ENCODE measurements at regions of chr11 and their contacts with region 1.

Region 1: DNA sequence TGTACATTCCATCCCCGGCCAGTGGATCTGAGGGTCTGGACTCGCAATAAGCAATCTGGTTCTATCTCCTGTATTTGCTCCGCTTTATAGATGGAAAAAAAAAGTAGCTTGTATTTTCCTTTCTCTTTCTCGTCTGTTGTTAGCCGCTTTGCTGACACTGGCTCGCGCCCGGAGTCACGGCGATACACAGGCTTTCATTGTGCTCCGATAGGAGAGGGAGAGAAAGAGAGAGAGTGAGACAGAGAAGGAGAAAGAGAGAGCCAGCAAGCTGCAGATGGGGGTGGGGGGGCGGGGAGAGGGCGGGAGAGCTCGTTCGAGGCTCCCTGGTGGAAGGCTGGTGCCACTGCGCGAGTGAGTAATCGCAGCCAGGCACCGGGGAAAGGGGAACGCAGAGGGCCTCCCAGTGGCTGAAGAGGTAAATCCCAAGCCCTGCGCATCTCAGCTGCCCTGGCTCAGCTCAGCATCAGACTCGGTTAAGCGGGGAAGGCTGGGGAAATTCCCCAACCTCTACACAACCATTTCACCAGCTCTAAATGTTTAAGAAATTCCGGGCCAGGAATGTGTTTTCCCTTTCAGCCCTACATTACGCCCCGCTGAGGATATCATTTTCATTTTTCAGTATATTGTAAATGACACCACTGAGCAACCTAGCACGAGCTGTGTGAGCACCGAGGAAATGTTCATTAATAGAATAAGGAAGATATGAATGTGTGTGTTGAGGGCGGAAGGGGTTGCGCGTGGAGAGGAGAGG is at the start of gene MAML2:
- DNase-seq: peak; percentile 83 to 97 (median 89)
- ATAC-seq: peak; percentile 88
- H3K4me3 ChIP-seq: peak within 1 kb of the TSS; percentile 92
- H3K4me3 Mint-ChIP-seq: peak within 1 kb of the TSS; percentile 97
- H3K27ac ChIP-seq: peak within 1 kb of the TSS; percentile 45 to 86
- H3K27ac Mint-ChIP-seq: peak within 1 kb of the TSS; percentile 87
- H3K4me1 ChIP-seq: peaks cover 43% of the 10 kb centered on the region
- H3K4me1 Mint-ChIP-seq: peaks cover 32% of the 10 kb centered on the region
- H3K27me3 ChIP-seq: no peaks in the 10 kb centered on the region
- H3K27me3 Mint-ChIP-seq: no peaks in the 10 kb centered on the region
- CTCF ChIP-seq: peak; percentile 96
- total RNA-seq, gene MAML2: 58.8 to 59.8 TPM

Region 2: GRCh38 chr11:95835768-95836488 is 507.2 kb before region 1 on chr11:
- CTCF ChIA-PET with region 1: interaction called, 11 read pairs
- POLR2A ChIA-PET with region 1: interaction called, 10 read pairs
- intact Hi-C with region 1: loop called (anchors 1 to 5 kb)
- DNase-seq: peak; percentile 23 to 75 (median 40)
- ATAC-seq: peak; percentile 99
- H3K4me3 ChIP-seq: no peak overlapping the region
- H3K4me3 Mint-ChIP-seq: no peak overlapping the region
- H3K27ac ChIP-seq: no peak overlapping the region
- H3K27ac Mint-ChIP-seq: no peak overlapping the region
- H3K4me1 ChIP-seq: no peaks in the 10 kb centered on the region
- H3K4me1 Mint-ChIP-seq: no peaks in the 10 kb centered on the region
- H3K27me3 ChIP-seq: no peaks in the 10 kb centered on the region
- H3K27me3 Mint-ChIP-seq: no peaks in the 10 kb centered on the region
- CTCF ChIP-seq: peak; percentile 94

Region 3: GRCh38 chr11:96091476-96091875 is 251.7 kb before region 1 on chr11:
- CTCF ChIA-PET with region 1: interaction called, 33 read pairs
- POLR2A ChIA-PET with region 1: interaction called, 10 read pairs
- intact Hi-C with region 1: no loop called
- DNase-seq: peak in 6 of 14 experiments; percentile 5 to 67 (median 44)
- ATAC-seq: peak; percentile 91
- H3K4me3 ChIP-seq: no peak overlapping the region
- H3K4me3 Mint-ChIP-seq: no peak overlapping the region
- H3K27ac ChIP-seq: no peak overlapping the region
- H3K27ac Mint-ChIP-seq: peak overlapping the region; percentile 21
- H3K4me1 ChIP-seq: peaks cover 13% of the 10 kb centered on the region
- H3K4me1 Mint-ChIP-seq: peaks cover 64% of the 10 kb centered on the region
- H3K27me3 ChIP-seq: no peaks in the 10 kb centered on the region
- H3K27me3 Mint-ChIP-seq: no peaks in the 10 kb centered on the region
- CTCF ChIP-seq: peak; percentile 35

Region 4: DNA sequence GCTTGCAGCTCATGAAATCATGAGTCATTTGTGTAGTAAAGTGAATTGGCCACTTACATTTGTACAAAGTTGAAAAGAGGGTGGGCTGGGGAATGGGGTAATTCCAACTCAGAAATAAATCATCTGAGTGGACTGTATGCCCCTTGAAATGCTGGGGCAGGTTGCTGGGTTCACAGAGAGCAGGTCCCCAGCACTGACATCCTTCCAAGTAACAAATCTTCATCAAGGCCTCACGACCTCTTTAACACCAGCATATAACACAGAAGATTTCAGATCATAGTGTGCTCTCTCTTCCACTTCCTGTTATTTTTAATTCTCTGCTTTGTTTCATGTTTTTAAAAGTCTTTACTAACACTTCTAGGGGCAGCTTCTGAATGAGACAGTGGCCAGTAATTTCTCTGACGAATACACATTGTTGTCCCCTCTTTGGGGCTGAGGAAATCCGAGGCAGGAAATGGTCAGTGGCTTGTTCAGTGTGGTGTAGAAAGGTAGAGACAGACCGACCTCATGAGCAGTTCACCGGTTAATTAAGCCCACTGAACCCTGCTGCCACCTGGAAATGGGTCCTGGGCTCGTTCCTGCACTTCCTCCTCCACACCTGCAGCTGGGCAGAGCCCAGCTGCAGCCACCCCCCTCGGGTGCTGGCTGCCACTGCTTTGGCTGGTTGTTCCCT is 127.9 kb before region 1 on chr11:
- CTCF ChIA-PET with region 1: interaction called, 8 read pairs
- POLR2A ChIA-PET with region 1: interaction called, 51 read pairs
- intact Hi-C with region 1: no loop called
- DNase-seq: peak in 12 of 14 experiments; percentile 11 to 71 (median 31)
- ATAC-seq: peak; percentile 68
- H3K4me3 ChIP-seq: peak overlapping the region; percentile 11
- H3K4me3 Mint-ChIP-seq: peak overlapping the region; percentile 65
- H3K27ac ChIP-seq: peak overlapping the region; percentile 75
- H3K27ac Mint-ChIP-seq: peak overlapping the region; percentile 92
- H3K4me1 ChIP-seq: peaks cover 70% of the 10 kb centered on the region
- H3K4me1 Mint-ChIP-seq: peaks cover 87% of the 10 kb centered on the region
- H3K27me3 ChIP-seq: no peaks in the 10 kb centered on the region
- H3K27me3 Mint-ChIP-seq: no peaks in the 10 kb centered on the region
- CTCF ChIP-seq: no peak

Region 5: GRCh38 chr11:96254087-96254486 is 89.0 kb before region 1 on chr11:
- CTCF ChIA-PET with region 1: interaction called, 23 read pairs
- POLR2A ChIA-PET with region 1: interaction called, 33 read pairs
- intact Hi-C with region 1: loop called in 1 of 2 experiments (anchors 1 kb)
- DNase-seq: peak in 7 of 14 experiments; percentile 21 to 84 (median 49)
- ATAC-seq: peak; percentile 15
- H3K4me3 ChIP-seq: peak overlapping the region; percentile 23
- H3K4me3 Mint-ChIP-seq: peak overlapping the region; percentile 81
- H3K27ac ChIP-seq: peak overlapping the region; percentile 26 to 53
- H3K27ac Mint-ChIP-seq: peak overlapping the region; percentile 99
- H3K4me1 ChIP-seq: peaks cover 47% of the 10 kb centered on the region
- H3K4me1 Mint-ChIP-seq: peaks cover 92% of the 10 kb centered on the region
- H3K27me3 ChIP-seq: no peaks in the 10 kb centered on the region
- H3K27me3 Mint-ChIP-seq: no peaks in the 10 kb centered on the region
- CTCF ChIP-seq: no peak

Region 6: DNA sequence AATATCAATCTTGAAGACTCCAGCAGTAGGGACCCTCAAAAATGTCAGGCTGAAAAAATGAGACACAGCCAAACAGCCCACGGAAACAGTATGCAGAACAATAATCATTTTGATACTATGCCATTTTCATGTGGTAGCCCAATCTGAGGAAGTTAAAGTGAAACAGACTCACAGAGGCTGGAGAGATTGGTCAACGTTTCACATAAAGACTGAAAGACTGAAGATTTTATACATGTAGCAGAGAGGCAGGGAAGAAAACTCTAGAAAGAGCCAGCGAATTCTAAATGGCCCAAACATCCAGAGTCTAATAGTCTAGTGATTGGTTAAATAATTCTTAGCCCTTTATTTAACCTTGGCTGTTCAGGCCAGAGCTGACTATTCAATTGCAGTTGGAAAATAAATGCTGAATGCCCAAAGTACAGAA is 49.5 kb before region 1 on chr11:
- CTCF ChIA-PET with region 1: interaction called, 19 read pairs
- POLR2A ChIA-PET with region 1: interaction called, 7 read pairs
- intact Hi-C with region 1: no loop called
- DNase-seq: peak in 2 of 14 experiments; percentile 30 to 41
- ATAC-seq: no peak
- H3K4me3 ChIP-seq: no peak overlapping the region
- H3K4me3 Mint-ChIP-seq: peak overlapping the region; percentile 60
- H3K27ac ChIP-seq: peak overlapping the region in 1 of 2 donors; percentile 4
- H3K27ac Mint-ChIP-seq: peak overlapping the region; percentile 46
- H3K4me1 ChIP-seq: peaks cover 4% of the 10 kb centered on the region
- H3K4me1 Mint-ChIP-seq: peaks cover 91% of the 10 kb centered on the region
- H3K27me3 ChIP-seq: no peaks in the 10 kb centered on the region
- H3K27me3 Mint-ChIP-seq: no peaks in the 10 kb centered on the region
- CTCF ChIP-seq: no peak

Region 7: DNA sequence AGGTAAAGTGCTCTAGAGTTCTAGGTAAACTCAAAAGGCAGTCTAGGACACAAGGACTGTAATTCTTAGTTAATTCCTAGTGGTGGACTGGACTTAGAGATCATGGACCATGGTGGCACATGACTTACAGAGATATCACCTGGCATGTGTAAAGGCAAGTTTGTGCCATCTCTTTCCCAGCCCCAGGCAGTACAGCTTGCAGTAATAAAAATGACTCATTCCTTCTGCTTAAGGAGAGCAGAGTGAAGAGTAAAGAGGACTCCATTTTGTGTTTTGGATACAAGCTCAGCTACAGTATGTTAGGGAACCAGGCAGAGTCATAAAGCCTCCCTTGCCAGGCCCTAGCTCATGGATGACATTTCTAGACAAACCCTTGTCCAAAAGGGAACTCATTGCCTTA is 676.6 kb after region 1 on chr11:
- CTCF ChIA-PET with region 1: no interaction called
- POLR2A ChIA-PET with region 1: no interaction called
- intact Hi-C with region 1: no loop called
- DNase-seq: no peak
- ATAC-seq: no peak
- H3K4me3 ChIP-seq: no peak overlapping the region
- H3K4me3 Mint-ChIP-seq: no peak overlapping the region
- H3K27ac ChIP-seq: no peak overlapping the region
- H3K27ac Mint-ChIP-seq: no peak overlapping the region
- H3K4me1 ChIP-seq: no peaks in the 10 kb centered on the region
- H3K4me1 Mint-ChIP-seq: no peaks in the 10 kb centered on the region
- H3K27me3 ChIP-seq: no peaks in the 10 kb centered on the region
- H3K27me3 Mint-ChIP-seq: no peaks in the 10 kb centered on the region
- CTCF ChIP-seq: no peak

Measured in CD4-positive, alpha-beta T cell (primary cell).